ENCODE measurements at regions of chr7 and their contacts with region 1.

Region 1: DNA sequence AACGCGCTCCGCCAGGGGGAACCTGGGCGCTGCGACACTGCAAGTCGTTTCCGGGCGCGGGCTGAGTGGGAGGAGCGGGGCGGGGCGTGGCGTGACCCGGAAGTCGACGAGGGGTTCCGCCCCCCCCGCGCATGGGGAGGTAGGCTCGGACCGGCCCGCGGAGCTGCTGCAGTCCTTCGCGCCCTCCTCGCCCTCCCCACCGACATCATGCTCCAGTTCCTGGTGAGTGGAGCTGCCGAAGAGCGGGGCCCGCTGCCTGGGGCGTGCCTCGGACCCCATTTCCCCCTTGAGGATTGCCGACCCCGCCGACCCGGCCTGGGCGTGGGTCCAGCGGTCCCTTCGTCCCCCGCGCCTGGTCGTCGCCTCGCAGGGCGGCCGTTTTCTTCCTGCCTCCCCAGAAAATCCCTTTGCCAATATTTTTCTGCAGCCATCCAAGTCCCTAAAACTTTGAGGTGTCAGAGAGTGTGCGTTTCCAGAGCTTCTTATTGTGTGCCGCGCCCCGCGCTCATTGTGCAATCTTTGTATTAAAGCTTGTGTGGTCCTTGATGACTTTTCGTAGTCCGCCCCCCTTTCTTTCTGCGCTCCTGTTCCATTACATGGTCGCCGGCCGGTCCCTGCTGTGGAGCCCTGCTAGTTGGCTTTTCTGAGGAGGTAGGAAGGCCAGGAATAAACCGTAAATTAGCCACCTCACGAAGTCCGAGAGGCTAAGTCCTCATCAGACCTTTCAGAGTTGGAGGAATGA is at the start of gene STMP1:
- DNase-seq: peak; percentile 92
- ATAC-seq: peak; percentile 87
- H3K4me3 ChIP-seq: peak within 1 kb of the TSS; percentile 81
- H3K27ac ChIP-seq: peak within 1 kb of the TSS; percentile 90
- H3K4me1 ChIP-seq: peaks cover 15% of the 10 kb centered on the region
- H3K27me3 ChIP-seq: no peaks in the 10 kb centered on the region
- CTCF ChIP-seq: peak; percentile 56
- total RNA-seq, gene STMP1: 7.1 and 8.8 TPM in 2 replicates

Region 2: GRCh38 chr7:135977007-135977741 is 314.6 kb after region 1 on chr7 and contains the start of gene MTPN:
- CTCF ChIA-PET with region 1: no interaction called
- POLR2A ChIA-PET with region 1: no interaction called
- intact Hi-C with region 1: loop called (anchors 5 kb)
- DNase-seq: peak; percentile 99
- ATAC-seq: peak; percentile 97
- H3K4me3 ChIP-seq: peak within 1 kb of the TSS; percentile 100
- H3K27ac ChIP-seq: peak within 1 kb of the TSS; percentile 37; the same call in 1 of the 2 replicates
- H3K4me1 ChIP-seq: peaks cover 33% of the 10 kb centered on the region
- H3K27me3 ChIP-seq: no peaks in the 10 kb centered on the region
- CTCF ChIP-seq: no peak
- total RNA-seq, gene MTPN: 96.0 and 113 TPM in 2 replicates